Activated CD4-positive, alpha-beta memory T cell treated with anti-CD3 and anti-CD28 coated beads, Interleukin-2, amount 10 ng/mL, durations not matched to agents 7 days and 5 days (primary cell): ENCODE measurements at regions of chr4 and their contacts with region 1.

Region 1: DNA sequence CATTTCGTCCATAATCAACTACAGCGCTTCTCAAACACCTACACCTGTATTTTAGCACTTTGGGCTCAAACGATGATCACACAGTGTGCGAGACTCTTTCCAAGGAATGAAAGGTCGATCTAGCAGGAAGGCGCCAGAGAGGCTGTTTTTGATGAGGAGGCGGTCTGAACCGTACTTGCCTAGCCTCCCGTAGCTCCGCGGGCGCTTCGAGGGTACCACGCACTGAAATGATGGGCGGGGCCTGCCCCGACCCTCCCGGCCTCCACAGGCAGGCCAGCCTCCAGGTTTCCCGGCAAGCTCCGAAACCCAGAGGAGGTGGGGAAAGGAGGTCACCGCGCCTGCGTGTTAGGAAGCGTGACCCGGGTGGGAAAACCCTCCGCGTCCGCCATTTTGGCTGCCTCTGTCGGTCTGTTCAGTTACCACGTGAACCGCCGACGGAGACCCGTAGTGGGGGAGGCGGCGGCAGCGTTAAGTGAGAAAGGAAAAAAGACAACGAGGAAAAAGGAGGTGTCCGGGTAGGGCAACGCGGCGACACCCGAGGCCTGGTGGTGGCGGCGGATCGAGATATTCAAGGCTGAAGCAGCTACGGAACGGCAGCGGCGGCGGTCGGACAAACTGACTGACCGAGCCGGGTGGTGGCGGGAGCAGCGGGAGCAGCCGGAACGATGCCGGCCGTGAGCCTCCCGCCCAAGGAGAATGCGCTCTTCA is at the start of gene NAA15:
- DNase-seq: peak; percentile 97
- H3K4me3 Mint-ChIP-seq: peak within 1 kb of the TSS; percentile 88
- H3K27ac Mint-ChIP-seq: peak within 1 kb of the TSS; percentile 94
- H3K4me1 Mint-ChIP-seq: peaks cover 58% of the 10 kb centered on the region
- H3K27me3 Mint-ChIP-seq: no peaks in the 10 kb centered on the region
- total RNA-seq, gene NAA15: 45.7 to 52.5 TPM

Region 2: GRCh38 chr4:139083956-139084803 is 217.1 kb before region 1 on chr4:
- CTCF ChIA-PET with region 1: interaction called, 12 read pairs
- POLR2A ChIA-PET with region 1: interaction called, 46 read pairs
- DNase-seq: peak; percentile 86
- H3K4me3 Mint-ChIP-seq: peak overlapping the region; percentile 80
- H3K27ac Mint-ChIP-seq: peak overlapping the region; percentile 98
- H3K4me1 Mint-ChIP-seq: peaks cover 39% of the 10 kb centered on the region
- H3K27me3 Mint-ChIP-seq: no peaks in the 10 kb centered on the region

Region 3: DNA sequence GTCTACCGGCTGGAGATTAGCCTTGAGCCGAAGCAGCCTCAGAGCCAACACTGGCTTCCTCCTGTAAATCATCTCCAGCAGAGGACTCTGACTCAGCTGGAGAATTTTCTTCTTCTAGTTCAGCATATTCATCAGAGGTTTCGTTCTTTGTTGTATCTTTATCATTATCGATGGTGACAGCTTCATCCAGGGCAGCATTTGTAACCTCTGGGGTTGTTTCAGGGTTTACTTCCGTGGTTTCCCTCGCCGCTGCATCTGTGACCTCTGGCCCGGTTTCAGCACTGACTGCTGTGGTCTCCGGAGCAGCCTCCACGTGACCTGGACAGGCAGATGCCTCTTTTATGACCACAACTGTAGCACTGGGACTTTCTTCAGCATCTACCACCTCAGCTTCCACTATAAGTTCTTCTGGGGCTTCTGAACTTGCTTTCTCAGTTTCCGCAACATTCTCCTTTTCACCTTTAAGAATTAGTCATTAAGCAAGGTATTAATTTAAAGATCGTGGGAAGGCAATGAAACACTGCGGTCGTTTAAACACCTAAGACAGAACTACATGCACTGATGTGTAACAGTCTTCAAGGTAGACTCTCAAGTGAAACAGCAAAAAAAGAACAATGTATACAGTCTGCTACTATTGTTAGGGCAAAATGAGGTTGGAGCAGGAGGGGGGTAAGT is 34.5 kb before region 1 on chr4:
- CTCF ChIA-PET with region 1: interaction called, 33 read pairs
- POLR2A ChIA-PET with region 1: interaction called, 24 read pairs
- DNase-seq: peak; percentile 88
- H3K4me3 Mint-ChIP-seq: peak overlapping the region; percentile 59
- H3K27ac Mint-ChIP-seq: peak overlapping the region; percentile 60
- H3K4me1 Mint-ChIP-seq: peaks cover 32% of the 10 kb centered on the region
- H3K27me3 Mint-ChIP-seq: peaks cover 14% of the 10 kb centered on the region

Region 4: GRCh38 chr4:139453371-139454110 is 152.3 kb after region 1 on chr4:
- CTCF ChIA-PET with region 1: interaction called, 6 read pairs
- POLR2A ChIA-PET with region 1: interaction called, 15 read pairs
- DNase-seq: peak; percentile 98
- H3K4me3 Mint-ChIP-seq: peak overlapping the region; percentile 93
- H3K27ac Mint-ChIP-seq: peak overlapping the region; percentile 100
- H3K4me1 Mint-ChIP-seq: peaks cover 59% of the 10 kb centered on the region
- H3K27me3 Mint-ChIP-seq: no peaks in the 10 kb centered on the region

Region 5: DNA sequence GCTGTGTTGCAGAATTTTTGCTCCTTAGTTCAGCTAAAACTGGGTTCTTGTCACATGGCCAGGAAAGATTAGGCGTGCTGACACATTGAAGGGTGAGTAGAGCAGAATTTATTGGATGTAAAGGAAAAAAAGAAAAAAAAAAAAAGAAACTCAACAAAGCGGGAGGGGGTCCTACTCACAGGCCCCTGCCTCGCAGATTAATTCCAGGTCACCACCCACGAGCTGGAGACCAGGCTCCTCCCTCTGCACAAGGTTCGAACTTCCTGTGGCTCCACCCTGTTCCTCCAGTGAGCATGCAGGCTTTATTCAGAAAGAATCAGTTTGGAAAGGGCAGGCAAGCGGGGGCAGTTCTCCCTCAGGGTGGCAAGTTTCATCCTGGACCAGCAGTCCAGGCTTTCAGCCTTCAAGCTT is 381.5 kb after region 1 on chr4:
- CTCF ChIA-PET with region 1: no interaction called
- POLR2A ChIA-PET with region 1: no interaction called
- DNase-seq: no peak
- H3K4me3 Mint-ChIP-seq: no peak overlapping the region
- H3K27ac Mint-ChIP-seq: no peak overlapping the region
- H3K4me1 Mint-ChIP-seq: peaks cover 20% of the 10 kb centered on the region
- H3K27me3 Mint-ChIP-seq: no peaks in the 10 kb centered on the region